PC-3 (cell line): ENCODE measurements at regions of chr2 and their contacts with region 1.

Region 1: DNA sequence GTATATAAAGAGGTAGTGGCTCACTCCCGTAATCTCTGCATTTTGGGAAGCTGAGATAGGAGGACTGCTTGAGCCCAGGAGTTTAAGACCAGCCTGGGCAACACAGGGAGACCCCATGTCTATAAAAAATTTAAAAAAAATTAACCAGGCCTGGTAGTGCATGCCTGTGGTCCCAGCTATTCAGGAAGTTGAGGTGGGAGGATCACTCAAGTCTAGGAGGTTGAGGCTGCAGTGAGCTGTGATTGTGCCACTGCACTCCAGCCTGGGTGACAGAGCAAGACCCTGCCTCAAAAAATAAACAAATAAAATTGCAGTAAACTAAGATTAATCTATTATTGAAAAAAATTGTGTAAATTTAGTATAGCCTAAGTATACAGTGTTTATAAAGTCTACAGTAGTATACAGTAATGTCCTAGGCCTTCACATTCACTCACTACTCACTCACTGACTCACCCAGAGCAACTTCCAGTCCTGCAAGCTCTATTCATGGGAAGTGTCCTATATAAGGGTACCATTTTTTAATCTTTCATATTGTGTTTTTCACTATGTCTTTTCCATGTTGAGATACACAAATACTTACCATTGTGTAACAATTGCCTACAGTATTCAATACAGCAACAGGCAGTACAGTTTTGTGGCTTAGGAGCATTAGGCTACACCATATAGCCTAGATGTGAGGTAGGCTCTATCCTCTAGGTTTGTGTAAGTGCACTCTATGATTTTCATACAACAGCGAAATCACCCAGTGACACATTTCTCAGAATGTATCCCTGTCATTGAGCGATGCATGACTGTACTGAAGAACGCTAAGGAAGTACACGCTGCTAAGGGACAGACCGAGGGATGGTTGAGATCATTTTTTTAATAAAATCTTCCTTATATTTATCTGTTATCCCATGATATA is 10.4 kb upstream of the MAP4K3 start:
- DNase-seq: peak; percentile 61
- ATAC-seq: peak; percentile 83
- H3K4me3 ChIP-seq: peak overlapping the region; percentile 57
- H3K27ac ChIP-seq: peak overlapping the region; percentile 99
- H3K4me1 ChIP-seq: peaks cover 41% of the 10 kb centered on the region
- H3K27me3 ChIP-seq: no peaks in the 10 kb centered on the region
- CTCF ChIP-seq: no peak

Region 2: DNA sequence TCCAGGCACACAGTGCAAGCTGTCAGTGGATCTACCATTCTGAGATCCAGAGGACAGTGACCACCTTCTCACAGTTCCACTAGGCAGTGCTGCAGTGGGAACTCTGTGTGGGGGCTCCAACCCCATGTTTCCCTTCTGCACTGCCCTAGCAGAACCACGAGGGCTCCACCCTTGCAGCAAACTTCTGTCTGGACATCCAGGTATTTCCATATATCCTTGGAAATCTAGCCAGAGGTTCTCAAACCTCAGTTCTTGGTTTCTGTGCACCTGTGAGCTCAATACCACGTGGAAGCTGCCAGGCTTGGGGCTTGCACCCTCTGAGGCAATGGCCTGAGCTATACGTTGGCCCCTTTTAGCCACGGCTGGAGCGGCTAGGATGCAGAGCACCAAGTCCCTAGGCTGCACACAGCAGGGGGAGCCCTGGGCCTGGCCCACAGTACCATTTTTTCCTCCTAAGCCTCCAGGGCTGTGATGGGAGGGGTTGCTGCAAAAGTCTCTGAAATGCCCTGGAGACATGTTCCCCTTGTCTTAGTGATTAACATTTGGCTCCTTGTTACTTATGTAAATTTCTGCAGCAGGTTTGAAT is 88.0 kb before region 1 on chr2:
- CTCF ChIA-PET with region 1: no interaction called
- POLR2A ChIA-PET with region 1: no interaction called
- intact Hi-C with region 1: no loop called
- DNase-seq: no peak
- ATAC-seq: no peak
- H3K4me3 ChIP-seq: no peak overlapping the region
- H3K27ac ChIP-seq: no peak overlapping the region
- H3K4me1 ChIP-seq: no peaks in the 10 kb centered on the region
- H3K27me3 ChIP-seq: no peaks in the 10 kb centered on the region
- CTCF ChIP-seq: no peak

Region 3: GRCh38 chr2:39394516-39394961 is 53.0 kb before region 1 on chr2:
- CTCF ChIA-PET with region 1: no interaction called
- POLR2A ChIA-PET with region 1: no interaction called
- intact Hi-C with region 1: no loop called
- DNase-seq: no peak
- ATAC-seq: no peak
- H3K4me3 ChIP-seq: no peak overlapping the region
- H3K27ac ChIP-seq: no peak overlapping the region
- H3K4me1 ChIP-seq: peaks cover 25% of the 10 kb centered on the region
- H3K27me3 ChIP-seq: no peaks in the 10 kb centered on the region
- CTCF ChIP-seq: no peak

Region 4: DNA sequence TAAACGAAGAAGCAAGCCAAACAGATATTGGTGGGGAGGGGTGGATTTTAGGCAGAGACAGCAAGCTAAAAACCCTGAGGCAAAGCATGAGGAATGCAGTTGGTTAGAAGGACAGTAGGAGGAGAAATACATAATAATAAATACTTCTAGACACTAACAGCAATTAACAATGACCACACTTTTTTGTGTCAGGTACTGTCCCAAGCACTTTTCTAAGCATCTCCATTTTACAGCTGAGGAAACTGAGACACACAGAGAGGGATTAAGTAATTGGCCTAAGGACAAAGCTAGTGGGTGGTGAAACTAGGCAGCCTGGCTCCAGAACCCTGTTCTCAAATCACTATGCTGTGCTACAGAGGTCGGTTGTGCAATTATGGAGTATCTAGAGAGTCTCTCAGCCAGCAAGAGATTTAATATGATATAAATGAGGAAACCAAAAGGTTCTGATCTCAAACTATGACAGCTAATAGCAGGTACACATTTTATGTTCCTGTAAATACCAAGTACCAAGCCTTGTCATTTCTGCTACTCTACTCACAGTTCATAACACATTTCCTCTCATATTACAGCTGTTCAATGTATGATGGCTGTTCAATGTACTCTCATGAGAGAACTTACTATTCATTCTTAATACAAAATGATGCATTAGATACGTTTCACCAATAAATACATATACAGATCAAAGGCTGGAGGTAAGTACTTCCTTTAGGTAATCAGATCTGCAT is 15.8 kb before region 1 on chr2:
- CTCF ChIA-PET with region 1: interaction called, 15 read pairs
- POLR2A ChIA-PET with region 1: no interaction called
- intact Hi-C with region 1: no loop called
- DNase-seq: peak; percentile 43
- ATAC-seq: 0 out of 2 replicates have a peak, but pooled peaks have one; percentile 7
- H3K4me3 ChIP-seq: 0 out of 2 replicates have a peak overlapping the region, but pooled peaks have one; percentile 2
- H3K27ac ChIP-seq: peak overlapping the region; percentile 3; the same call in 1 of the 2 replicates
- H3K4me1 ChIP-seq: peaks cover 59% of the 10 kb centered on the region
- H3K27me3 ChIP-seq: no peaks in the 10 kb centered on the region
- CTCF ChIP-seq: no peak

Region 5: DNA sequence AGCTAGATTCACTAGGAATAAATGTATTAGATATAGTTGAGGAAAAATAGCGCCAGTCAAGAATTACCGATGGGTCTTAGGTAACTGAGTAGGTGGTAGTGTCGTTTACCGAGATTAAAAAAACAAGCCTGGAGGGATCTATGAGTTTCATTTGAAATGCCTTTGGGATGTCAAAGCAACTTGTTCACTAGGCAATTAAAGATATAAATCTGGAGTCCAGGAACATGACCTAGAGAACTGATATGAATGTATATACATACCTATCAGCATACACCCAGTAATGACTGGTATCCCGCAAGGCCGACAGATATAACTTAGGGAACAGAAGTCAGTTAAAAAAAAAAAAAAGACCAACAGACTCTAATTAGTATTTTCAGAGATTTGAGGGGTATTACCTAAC is 18.8 kb after region 1 on chr2:
- CTCF ChIA-PET with region 1: interaction called, 3 read pairs
- POLR2A ChIA-PET with region 1: no interaction called
- intact Hi-C with region 1: loop called (anchors 2 kb)
- DNase-seq: no peak
- ATAC-seq: no peak
- H3K4me3 ChIP-seq: no peak overlapping the region
- H3K27ac ChIP-seq: no peak overlapping the region
- H3K4me1 ChIP-seq: peaks cover 35% of the 10 kb centered on the region
- H3K27me3 ChIP-seq: no peaks in the 10 kb centered on the region
- CTCF ChIP-seq: no peak

Region 6: GRCh38 chr2:39481611-39482010 is 34.1 kb after region 1 on chr2:
- CTCF ChIA-PET with region 1: no interaction called
- POLR2A ChIA-PET with region 1: no interaction called
- intact Hi-C with region 1: loop called (anchors 1 kb)
- DNase-seq: peak; percentile 75
- ATAC-seq: peak; percentile 84
- H3K4me3 ChIP-seq: no peak overlapping the region
- H3K27ac ChIP-seq: peak overlapping the region; percentile 46
- H3K4me1 ChIP-seq: peaks cover 17% of the 10 kb centered on the region
- H3K27me3 ChIP-seq: no peaks in the 10 kb centered on the region
- CTCF ChIP-seq: no peak

Region 7: DNA sequence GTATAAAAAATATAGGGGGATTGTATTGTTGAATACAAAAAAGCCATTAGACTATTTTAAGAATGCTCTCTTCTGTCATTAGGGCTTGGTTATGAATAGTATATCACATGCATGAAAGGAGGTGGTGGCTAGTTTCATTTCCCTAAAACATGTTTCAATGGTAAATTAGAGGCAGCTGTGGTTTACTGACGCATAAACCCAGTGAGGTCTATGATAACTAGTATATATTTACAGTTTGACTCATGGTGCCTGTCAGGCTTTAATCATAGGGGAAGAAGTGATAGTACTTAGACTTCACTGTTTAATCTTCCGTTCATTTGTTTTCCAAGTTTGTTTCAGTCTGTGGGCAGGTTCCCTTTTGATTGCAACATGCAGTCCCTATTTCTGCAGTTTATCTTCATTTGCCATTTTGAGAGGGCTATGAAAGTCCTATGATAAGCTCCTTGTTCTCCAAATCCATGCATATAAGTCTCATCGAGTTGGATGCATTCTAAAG is 44.6 kb after region 1 on chr2:
- CTCF ChIA-PET with region 1: no interaction called
- POLR2A ChIA-PET with region 1: interaction called, 5 read pairs
- intact Hi-C with region 1: loop called (anchors 1 kb)
- DNase-seq: peak; percentile 97
- ATAC-seq: peak; percentile 76
- H3K4me3 ChIP-seq: peak overlapping the region; percentile 26; the same call in 1 of the 2 replicates
- H3K27ac ChIP-seq: peak overlapping the region; percentile 95
- H3K4me1 ChIP-seq: peaks cover 83% of the 10 kb centered on the region
- H3K27me3 ChIP-seq: no peaks in the 10 kb centered on the region
- CTCF ChIP-seq: no peak